Activated CD4-positive, alpha-beta T cell treated with anti-CD3 and anti-CD28 coated beads for 36 hours (primary cell): ENCODE measurements at regions of chr13 and their contacts with region 1.

Region 1: DNA sequence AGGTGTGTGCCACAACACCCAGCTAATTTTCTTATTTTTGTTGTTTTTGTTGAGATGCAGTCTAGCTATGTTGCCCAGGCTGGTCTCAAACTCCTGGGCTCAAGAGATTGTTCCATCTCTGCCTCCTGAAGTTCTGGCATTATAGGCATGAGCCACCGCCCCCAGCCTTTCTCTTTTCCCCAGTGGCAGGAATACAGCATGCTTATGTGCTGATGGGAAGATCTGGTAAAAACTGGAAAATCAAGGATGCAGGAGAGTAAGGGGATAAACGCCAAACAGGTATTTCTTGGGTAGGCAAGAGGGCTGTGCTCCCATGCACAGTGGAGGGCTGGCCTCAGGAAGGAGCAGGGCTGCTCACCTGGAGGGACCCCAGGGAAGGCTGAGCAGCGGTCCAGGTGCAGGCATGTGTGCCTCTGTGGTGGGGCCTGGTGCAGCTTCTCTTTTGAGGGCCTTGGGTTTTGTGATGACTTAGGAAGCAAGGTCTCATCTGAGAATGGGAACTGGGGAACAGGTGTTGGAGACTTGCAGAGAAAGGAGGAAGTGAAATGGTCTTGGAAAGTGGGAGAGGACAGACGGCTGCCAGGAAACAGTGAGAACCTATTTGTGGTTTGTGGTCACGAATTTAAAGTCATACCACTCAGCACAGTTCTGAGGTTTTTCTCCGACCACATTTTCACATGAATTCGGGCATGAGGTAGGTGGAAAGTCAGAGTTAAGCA is 106.5 kb downstream of the TEX26 start:
- DNase-seq: peak; percentile 41
- ATAC-seq: peak; percentile 72
- H3K4me3 Mint-ChIP-seq: peak overlapping the region; percentile 22
- H3K27ac Mint-ChIP-seq: peak overlapping the region; percentile 44
- H3K4me1 Mint-ChIP-seq: peaks cover 39% of the 10 kb centered on the region
- H3K27me3 Mint-ChIP-seq: peaks cover 13% of the 10 kb centered on the region

Region 2: DNA sequence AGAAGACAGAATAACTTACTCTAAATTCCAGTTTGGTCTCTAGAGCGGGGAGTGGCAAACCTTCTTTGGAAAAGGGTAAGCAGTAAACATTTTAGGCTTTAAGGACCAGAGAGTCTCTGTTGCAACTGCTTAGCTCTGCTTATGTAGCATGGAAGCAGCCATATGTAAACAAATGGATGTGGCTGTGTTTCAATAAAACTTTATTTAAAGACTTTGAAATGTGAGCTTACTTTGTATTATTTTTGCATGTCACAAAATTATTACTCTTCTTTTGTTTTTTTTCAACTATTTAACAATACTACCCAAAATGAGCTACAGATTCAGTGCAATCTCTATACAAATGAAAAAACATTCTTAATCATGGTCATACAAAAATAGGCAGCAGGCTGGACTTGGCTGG is 142.1 kb before region 1 on chr13:
- CTCF ChIA-PET with region 1: no interaction called
- POLR2A ChIA-PET with region 1: no interaction called
- intact Hi-C with region 1: no loop called
- DNase-seq: no peak
- ATAC-seq: no peak
- H3K4me3 Mint-ChIP-seq: no peak overlapping the region
- H3K27ac Mint-ChIP-seq: no peak overlapping the region
- H3K4me1 Mint-ChIP-seq: peaks cover 8% of the 10 kb centered on the region
- H3K27me3 Mint-ChIP-seq: peaks cover 31% of the 10 kb centered on the region

Region 3: DNA sequence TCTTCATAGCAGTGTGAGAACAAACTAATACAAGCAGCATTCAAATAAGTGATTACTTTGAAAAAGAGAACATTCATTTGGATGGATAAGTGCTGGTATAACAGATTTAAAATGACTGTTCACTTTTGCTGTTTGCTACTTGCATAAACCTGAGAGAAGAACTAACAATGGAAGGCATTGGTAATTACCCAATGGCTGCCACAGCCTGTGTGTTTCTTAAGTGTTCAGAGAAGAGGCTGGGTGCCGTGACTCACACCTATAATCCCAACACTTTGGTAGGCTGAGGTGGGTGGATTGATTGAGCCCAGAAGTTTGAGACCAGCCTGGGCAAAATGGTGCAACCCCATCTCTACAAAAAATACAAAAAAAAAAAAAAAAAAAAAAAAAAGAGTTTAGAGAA is 111.4 kb before region 1 on chr13:
- CTCF ChIA-PET with region 1: no interaction called
- POLR2A ChIA-PET with region 1: no interaction called
- intact Hi-C with region 1: loop called in 1 of 2 experiments (anchors 5 kb)
- DNase-seq: peak; percentile 25
- ATAC-seq: peak; percentile 80
- H3K4me3 Mint-ChIP-seq: no peak overlapping the region
- H3K27ac Mint-ChIP-seq: no peak overlapping the region
- H3K4me1 Mint-ChIP-seq: peaks cover 18% of the 10 kb centered on the region
- H3K27me3 Mint-ChIP-seq: peaks cover 38% of the 10 kb centered on the region